Activated T-helper 1 cell treated with anti-CD3 and anti-CD28 coated beads, Interleukin-12 subunit alpha, Interleukin-12 subunit beta, Interleukin-2, Interleukin-4 antibody, amounts not matched to agents 30 ng/mL and 10 ng/mL and 1 ng/mL, durations not matched to agents 14 hours and 24 hours and 36 hours (primary cell): ENCODE measurements at regions of chr11 and their contacts with region 1.

Region 1: DNA sequence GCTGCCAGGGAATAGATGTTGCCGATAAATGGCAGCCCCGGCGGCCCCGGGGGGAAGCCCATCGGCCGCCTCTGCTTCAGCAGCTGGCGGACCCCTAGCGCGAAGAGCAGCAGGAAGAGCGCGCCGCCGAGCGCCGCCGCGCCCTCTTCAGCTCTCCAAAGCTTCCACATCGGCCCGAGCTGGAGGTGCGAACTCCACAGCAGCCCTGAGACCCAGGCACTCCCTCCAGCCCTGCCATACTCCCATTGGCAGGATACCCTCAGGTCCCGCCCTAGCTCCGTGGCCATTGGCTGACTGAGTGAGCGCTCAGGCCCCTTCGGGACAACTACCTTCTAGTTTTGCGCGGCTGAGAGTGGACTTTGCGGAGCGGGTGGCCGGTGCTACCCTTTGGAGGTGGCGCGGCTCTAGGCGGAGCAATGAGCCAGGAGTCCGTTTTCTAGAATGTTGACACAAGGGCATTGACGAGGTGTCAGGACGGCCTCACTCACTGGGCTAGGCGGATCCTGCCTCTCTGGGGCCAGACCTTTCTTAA is at the start of gene CYP2R1:
- DNase-seq: peak; percentile 90
- H3K4me3 Mint-ChIP-seq: peak within 1 kb of the TSS; percentile 90
- H3K27ac Mint-ChIP-seq: peak within 1 kb of the TSS; percentile 98
- H3K4me1 Mint-ChIP-seq: peaks cover 61% of the 10 kb centered on the region
- H3K27me3 Mint-ChIP-seq: no peaks in the 10 kb centered on the region
- total RNA-seq, gene CYP2R1: 13.7 and 14.3 TPM in 2 replicates

Region 2: GRCh38 chr11:13668102-13668956 is 1223.8 kb before region 1 on chr11 and contains the start of gene FAR1:
- intact Hi-C with region 1: loop called (anchors 5 kb)
- DNase-seq: peak; percentile 97
- H3K4me3 Mint-ChIP-seq: peak within 1 kb of the TSS; percentile 98
- H3K27ac Mint-ChIP-seq: peak within 1 kb of the TSS; percentile 99
- H3K4me1 Mint-ChIP-seq: peaks cover 42% of the 10 kb centered on the region
- H3K27me3 Mint-ChIP-seq: peaks cover 17% of the 10 kb centered on the region
- total RNA-seq, gene FAR1: 67.3 and 67.4 TPM in 2 replicates

Region 3: DNA sequence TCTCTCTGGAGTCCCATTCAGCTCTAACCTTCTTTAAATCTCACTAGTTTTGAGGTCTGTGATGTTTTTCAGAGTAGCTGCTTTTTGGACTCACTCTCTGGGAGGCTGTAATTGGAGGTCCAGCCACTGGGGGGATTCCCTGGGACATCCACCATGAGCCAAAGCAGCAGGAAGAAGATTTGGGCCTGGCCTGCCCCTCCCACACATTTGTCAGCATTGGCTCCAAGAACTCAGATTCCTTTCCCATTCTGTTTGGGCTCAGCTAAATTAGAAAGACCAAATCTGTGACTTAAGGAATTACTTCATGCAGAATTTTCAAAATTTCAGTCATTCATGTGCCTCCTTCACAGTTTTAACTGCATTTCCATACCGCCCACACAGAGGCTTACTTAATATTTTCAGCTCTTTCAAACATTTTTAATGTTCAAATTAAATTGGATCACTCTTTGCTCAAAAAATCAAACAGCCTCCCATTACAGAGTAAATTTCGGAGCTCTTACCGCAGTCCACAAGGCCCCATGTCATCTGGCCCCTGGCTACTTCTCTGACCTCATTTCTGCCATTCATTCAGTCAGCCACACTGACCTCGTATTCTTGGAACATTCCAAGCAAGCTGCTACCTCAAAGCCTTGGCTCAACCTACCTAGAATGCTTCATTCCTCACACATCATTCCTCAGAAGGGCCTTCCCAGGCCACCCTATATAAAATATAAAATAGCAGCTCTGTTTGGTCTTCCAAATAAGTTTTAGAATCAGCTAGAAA is 478.6 kb before region 1 on chr11:
- intact Hi-C with region 1: loop called (anchors 1 kb)
- DNase-seq: no peak
- H3K4me3 Mint-ChIP-seq: no peak overlapping the region
- H3K27ac Mint-ChIP-seq: no peak overlapping the region
- H3K4me1 Mint-ChIP-seq: peaks cover 79% of the 10 kb centered on the region
- H3K27me3 Mint-ChIP-seq: no peaks in the 10 kb centered on the region

Region 4: GRCh38 chr11:14519917-14520746 is 372.0 kb before region 1 on chr11 and contains the start of gene PSMA1:
- intact Hi-C with region 1: loop called (anchors 1 kb)
- DNase-seq: peak; percentile 92
- H3K4me3 Mint-ChIP-seq: peak within 1 kb of the TSS; percentile 94
- H3K27ac Mint-ChIP-seq: peak within 1 kb of the TSS; percentile 94
- H3K4me1 Mint-ChIP-seq: peaks cover 33% of the 10 kb centered on the region
- H3K27me3 Mint-ChIP-seq: no peaks in the 10 kb centered on the region
- total RNA-seq, gene PSMA1: 313 and 340 TPM in 2 replicates

Region 5: GRCh38 chr11:14544611-14545010 is 347.5 kb before region 1 on chr11:
- intact Hi-C with region 1: loop called (anchors 1 kb)
- DNase-seq: no peak
- H3K4me3 Mint-ChIP-seq: peak overlapping the region; percentile 45
- H3K27ac Mint-ChIP-seq: peak overlapping the region; percentile 91
- H3K4me1 Mint-ChIP-seq: peaks cover 73% of the 10 kb centered on the region
- H3K27me3 Mint-ChIP-seq: no peaks in the 10 kb centered on the region

Region 6: GRCh38 chr11:14764579-14765527 is 127.2 kb before region 1 on chr11:
- intact Hi-C with region 1: loop called (anchors 1 kb)
- DNase-seq: peak; percentile 60
- H3K4me3 Mint-ChIP-seq: no peak overlapping the region
- H3K27ac Mint-ChIP-seq: no peak overlapping the region
- H3K4me1 Mint-ChIP-seq: peaks cover 41% of the 10 kb centered on the region
- H3K27me3 Mint-ChIP-seq: no peaks in the 10 kb centered on the region

Region 7: GRCh38 chr11:15038963-15039362 is 146.9 kb after region 1 on chr11:
- intact Hi-C with region 1: no loop called
- DNase-seq: no peak
- H3K4me3 Mint-ChIP-seq: no peak overlapping the region
- H3K27ac Mint-ChIP-seq: no peak overlapping the region
- H3K4me1 Mint-ChIP-seq: no peaks in the 10 kb centered on the region
- H3K27me3 Mint-ChIP-seq: peaks cover 16% of the 10 kb centered on the region